ENCODE measurements at regions of chr2 and their contacts with region 1.

Region 1: GRCh38 chr2:129191235-129191929 is 788.1 kb upstream of the RAB6C start:
- DNase-seq: no peak
- ATAC-seq: no peak
- H3K4me3 Mint-ChIP-seq: no peak overlapping the region
- H3K27ac Mint-ChIP-seq: no peak overlapping the region
- H3K4me1 Mint-ChIP-seq: no peaks in the 10 kb centered on the region
- H3K27me3 Mint-ChIP-seq: peaks cover 6% of the 10 kb centered on the region
- CTCF ChIP-seq: no peak

Region 2: DNA sequence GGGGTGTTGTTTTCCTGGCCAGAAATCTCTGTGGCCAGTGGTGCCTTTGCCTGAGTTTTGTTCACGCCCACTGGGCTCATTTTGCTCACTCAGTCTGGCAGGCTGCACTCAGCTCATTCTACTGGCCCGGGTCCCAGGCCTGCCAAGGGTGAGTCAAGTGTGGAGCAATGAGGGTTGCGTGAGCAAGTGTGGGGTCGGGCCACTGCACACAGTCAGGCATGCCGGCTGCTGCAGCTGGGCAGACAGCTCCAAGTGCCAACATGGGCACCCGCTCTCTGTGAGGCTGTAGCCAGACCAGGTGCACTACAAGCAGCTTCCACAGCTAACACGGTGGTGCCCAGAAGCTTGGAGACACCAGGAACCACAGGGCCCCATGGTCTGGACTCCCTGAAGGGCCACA is 13.0 kb before region 1 on chr2:
- CTCF ChIA-PET with region 1: no interaction called
- POLR2A ChIA-PET with region 1: no interaction called
- intact Hi-C with region 1: no loop called
- DNase-seq: no peak
- ATAC-seq: no peak
- H3K4me3 Mint-ChIP-seq: no peak overlapping the region
- H3K27ac Mint-ChIP-seq: no peak overlapping the region
- H3K4me1 Mint-ChIP-seq: no peaks in the 10 kb centered on the region
- H3K27me3 Mint-ChIP-seq: no peaks in the 10 kb centered on the region
- CTCF ChIP-seq: no peak

Region 3: DNA sequence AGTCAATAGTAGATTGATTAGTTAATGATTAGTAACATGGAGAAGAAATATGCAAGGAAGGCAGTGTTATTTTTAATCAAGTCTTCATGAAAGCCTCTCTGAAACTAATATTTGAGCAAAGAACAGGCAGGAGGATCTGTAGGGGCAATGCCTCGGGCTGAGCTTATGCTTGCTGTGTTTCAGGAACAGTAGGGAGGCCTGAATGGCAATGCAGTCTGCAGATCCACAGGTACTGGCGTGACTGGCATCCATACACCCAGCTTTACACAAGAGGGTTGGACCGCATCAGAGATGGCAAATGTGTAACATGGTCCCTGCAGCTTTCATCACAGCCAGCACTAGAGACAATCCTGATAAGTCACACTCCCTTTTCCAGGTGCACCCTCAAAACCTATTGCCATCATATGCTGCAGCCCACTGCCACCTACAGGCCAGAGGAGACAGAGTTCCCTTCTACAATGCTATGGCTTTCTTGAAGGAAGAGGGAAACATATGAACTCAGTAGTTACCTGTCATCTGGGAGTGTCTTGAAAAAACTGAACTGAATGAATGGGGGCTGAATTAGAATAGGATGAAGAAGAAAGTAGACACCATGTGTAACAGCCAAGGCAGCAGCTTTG is 205.7 kb after region 1 on chr2:
- CTCF ChIA-PET with region 1: no interaction called
- POLR2A ChIA-PET with region 1: no interaction called
- intact Hi-C with region 1: loop called (anchors 10 kb)
- DNase-seq: no peak
- ATAC-seq: no peak
- H3K4me3 Mint-ChIP-seq: no peak overlapping the region
- H3K27ac Mint-ChIP-seq: no peak overlapping the region
- H3K4me1 Mint-ChIP-seq: no peaks in the 10 kb centered on the region
- H3K27me3 Mint-ChIP-seq: peaks cover 7% of the 10 kb centered on the region
- CTCF ChIP-seq: no peak

Measured in activated B cell treated with CpG ODN at 0.5 μM for 24 hours (primary cell).